ENCODE measurements at regions of chr13 and their contacts with region 1.

Region 1: GRCh38 chr13:47774671-47774994 is 226.4 kb downstream of the SUCLA2 start:
- DNase-seq: no peak
- H3K4me3 ChIP-seq: no peak overlapping the region
- H3K27ac ChIP-seq: no peak overlapping the region
- H3K4me1 ChIP-seq: peaks cover 0 to 5% (median 0%) of the 10 kb centered on the region in 4 donors
- H3K27me3 ChIP-seq: no peaks in the 10 kb centered on the region
- CTCF ChIP-seq: no peak

Region 2: GRCh38 chr13:46759846-46760245 is 1014.8 kb before region 1 on chr13:
- intact Hi-C with region 1: loop called (anchors 5 kb)
- DNase-seq: no peak
- H3K4me3 ChIP-seq: no peak overlapping the region
- H3K27ac ChIP-seq: peak overlapping the region; percentile 67 to 68
- H3K4me1 ChIP-seq: peaks cover 0 to 51% (median 26%) of the 10 kb centered on the region in 4 donors
- H3K27me3 ChIP-seq: no peaks in the 10 kb centered on the region
- CTCF ChIP-seq: no peak

Region 3: DNA sequence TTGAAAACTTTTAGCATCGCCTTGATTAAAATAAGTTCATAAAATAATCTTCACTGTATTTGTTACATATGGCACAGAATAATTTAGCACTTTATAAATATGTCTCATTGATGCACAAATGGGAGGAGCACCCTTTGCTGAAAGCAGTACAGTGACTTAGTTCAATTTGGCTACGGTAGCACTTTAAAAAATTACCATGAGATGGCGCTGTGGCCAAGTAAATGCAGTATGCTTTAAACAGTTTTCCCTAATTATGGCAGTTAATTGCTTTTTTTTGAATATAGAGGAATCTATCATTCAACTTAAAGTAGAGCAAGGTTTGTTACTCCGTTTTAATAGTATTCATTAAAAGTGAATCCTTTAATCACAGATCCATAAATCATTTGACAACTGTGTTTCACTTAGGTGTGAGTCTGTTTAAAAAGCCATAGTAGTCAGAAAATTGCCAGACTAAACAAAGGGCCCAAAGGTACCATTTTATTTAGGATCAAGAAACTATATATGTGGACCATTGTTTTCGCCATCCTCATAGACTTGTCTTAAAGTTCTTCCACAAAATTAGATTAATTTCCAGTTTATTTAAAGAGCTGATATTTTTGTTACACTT is 942.9 kb before region 1 on chr13:
- intact Hi-C with region 1: loop called (anchors 5 kb)
- DNase-seq: no peak
- H3K4me3 ChIP-seq: no peak overlapping the region
- H3K27ac ChIP-seq: no peak overlapping the region
- H3K4me1 ChIP-seq: no peaks in the 10 kb centered on the region
- H3K27me3 ChIP-seq: no peaks in the 10 kb centered on the region
- CTCF ChIP-seq: peak; percentile 72 to 87

Region 4: GRCh38 chr13:46983881-46984280 is 790.8 kb before region 1 on chr13:
- intact Hi-C with region 1: loop called (anchors 5 kb)
- DNase-seq: no peak
- H3K4me3 ChIP-seq: no peak overlapping the region
- H3K27ac ChIP-seq: no peak overlapping the region
- H3K4me1 ChIP-seq: peaks cover 0 to 13% (median 0%) of the 10 kb centered on the region in 4 donors
- H3K27me3 ChIP-seq: no peaks in the 10 kb centered on the region
- CTCF ChIP-seq: no peak

Region 5: GRCh38 chr13:47757466-47758080 is 17.1 kb before region 1 on chr13:
- intact Hi-C with region 1: no loop called
- DNase-seq: no peak
- H3K4me3 ChIP-seq: no peak overlapping the region
- H3K27ac ChIP-seq: no peak overlapping the region
- H3K4me1 ChIP-seq: no peaks in the 10 kb centered on the region
- H3K27me3 ChIP-seq: no peaks in the 10 kb centered on the region
- CTCF ChIP-seq: no peak

Region 6: GRCh38 chr13:47846886-47847285 is 72.3 kb after region 1 on chr13:
- intact Hi-C with region 1: no loop called
- DNase-seq: no peak
- H3K4me3 ChIP-seq: no peak overlapping the region
- H3K27ac ChIP-seq: no peak overlapping the region
- H3K4me1 ChIP-seq: no peaks in the 10 kb centered on the region
- H3K27me3 ChIP-seq: no peaks in the 10 kb centered on the region
- CTCF ChIP-seq: no peak